ENCODE measurements at regions of chr10 and their contacts with region 1.

Region 1: DNA sequence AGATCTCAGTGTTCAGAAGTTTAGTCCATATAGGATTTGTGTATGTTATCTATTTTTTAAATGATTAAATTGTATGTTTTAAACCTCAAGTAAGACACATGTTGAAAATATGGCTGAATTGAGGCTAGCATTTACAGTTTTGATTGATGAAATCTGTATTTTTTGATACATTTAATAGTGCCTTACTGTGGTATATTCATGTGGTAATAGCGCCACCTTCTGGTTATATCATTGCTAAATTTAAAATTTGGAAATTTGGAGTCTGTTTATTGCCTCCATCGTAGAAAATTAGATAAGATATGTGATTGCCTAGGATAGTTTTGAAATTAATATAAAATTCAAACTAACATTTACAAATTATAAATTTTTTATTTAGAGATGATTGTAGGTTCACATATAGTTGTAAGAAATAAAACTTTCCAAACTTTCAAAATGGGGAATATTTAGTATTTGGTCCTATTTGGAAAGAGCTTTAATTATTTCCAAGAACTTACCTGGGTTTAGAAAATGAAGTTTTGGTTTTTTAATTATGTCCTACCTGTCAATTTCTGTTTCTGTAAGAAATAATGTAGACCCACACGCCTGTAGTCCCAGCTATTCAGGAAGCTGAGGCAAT is 19.1 kb upstream of the ARMS2 start:
- DNase-seq: no peak
- CTCF ChIP-seq: peak; percentile 36

Region 2: GRCh38 chr10:122267849-122268737 is 167.2 kb before region 1 on chr10:
- CTCF ChIA-PET with region 1: interaction called, 59 read pairs
- POLR2A ChIA-PET with region 1: no interaction called
- DNase-seq: peak; percentile 83
- CTCF ChIP-seq: peak; percentile 91

Region 3: GRCh38 chr10:122286867-122287266 is 148.5 kb before region 1 on chr10:
- CTCF ChIA-PET with region 1: interaction called, 74 read pairs
- POLR2A ChIA-PET with region 1: no interaction called
- DNase-seq: no peak
- CTCF ChIP-seq: no peak

Region 4: DNA sequence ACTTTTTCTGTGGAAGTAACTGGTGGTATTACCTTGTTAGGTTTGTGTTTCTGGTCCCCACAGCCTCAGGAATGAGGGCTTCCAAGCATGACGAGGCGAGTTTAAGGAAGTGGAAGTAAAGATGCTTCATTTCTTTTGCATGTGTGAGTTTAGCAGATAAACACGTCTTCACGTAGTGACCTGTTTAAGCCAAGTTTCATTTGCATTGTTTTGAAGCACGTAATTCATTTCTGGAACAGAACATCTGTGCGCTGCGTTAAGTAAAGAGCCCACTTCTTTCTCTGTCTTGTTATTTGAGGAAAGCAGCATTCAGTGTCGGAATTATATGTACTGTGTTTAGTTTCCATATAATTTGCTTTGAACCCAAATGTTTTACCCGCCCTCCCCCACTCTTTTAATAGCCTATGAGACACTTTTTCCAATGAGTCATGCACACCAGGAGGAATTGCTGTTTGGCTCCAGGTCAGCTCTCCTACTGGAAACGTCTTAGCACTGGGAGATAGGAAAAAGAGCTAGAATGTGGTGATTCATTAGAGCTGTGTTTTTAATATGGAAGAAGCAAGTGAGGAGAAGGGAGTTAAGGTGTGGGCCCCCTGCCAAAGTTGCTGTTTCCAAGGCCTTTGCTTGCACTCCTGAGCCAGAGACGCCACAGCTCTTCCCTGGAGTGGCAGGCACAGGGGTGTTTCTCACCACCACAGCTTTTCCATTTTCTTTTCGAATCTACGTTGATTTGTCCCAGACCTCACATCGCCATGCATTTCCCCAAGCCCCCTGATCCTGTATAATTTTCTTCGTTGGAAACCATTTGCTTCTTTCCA is 127.4 kb before region 1 on chr10:
- CTCF ChIA-PET with region 1: interaction called, 30 read pairs
- POLR2A ChIA-PET with region 1: interaction called, 3 read pairs
- DNase-seq: peak; percentile 57
- CTCF ChIP-seq: no peak

Region 5: DNA sequence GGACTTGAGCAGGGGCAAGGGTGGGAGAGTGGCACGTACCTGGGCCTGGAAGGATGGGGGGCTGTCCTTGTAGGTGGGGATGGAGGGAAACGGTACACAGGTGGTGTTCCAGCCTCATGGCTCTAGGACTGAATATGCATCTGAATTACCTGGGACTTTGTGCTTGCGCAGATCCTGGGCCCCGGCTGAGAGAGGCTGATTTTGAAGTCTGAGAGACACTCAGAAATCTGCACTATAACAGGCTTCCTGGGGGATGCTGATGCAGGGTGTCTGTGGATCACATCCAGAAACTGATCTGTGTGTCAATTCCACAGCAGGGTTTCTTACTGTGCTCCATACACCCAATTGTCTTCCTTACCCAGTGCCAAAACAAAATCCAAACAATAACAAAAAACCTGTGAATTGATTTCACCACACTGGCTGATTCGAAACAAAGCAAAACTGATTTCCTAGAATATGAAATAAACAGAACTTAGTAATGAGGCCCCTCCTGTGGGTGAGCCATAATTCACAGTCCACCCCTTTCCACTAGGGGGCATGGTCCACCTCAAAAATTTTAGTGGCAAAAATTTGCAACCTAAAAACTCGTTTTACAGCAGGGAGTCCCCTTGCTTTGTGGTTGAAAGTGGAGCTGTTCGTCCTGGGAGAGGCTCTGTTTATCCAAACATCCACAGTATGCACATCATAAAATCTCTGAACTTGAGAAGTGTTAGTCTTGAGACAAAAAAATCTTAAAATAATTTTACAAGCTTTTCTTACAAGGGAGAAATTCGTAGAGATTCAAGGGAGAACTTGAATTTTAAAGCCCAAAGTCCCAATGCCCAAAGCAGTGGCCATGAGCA is 92.8 kb before region 1 on chr10:
- CTCF ChIA-PET with region 1: interaction called, 50 read pairs
- POLR2A ChIA-PET with region 1: no interaction called
- DNase-seq: peak; percentile 62
- CTCF ChIP-seq: peak; percentile 62

Region 6: DNA sequence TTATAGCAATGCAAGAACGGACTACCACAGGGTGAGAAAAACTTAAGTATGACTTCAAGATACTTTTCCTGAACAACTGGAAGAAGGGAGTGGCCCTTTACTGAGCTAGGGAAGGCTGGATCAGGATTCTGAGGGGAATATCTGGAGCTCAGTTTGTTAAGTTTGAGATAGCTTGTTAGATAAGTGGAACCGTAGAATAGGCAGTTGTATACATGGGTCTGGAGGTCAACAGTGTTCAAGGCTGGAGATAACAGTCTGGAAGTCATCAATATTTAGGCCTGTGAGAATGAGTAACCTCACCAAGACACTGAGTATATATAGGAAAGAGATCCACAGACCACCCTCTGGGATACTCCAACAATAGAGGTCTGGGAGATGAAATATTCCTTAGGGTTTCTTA is 53.6 kb before region 1 on chr10:
- CTCF ChIA-PET with region 1: no interaction called
- POLR2A ChIA-PET with region 1: no interaction called
- DNase-seq: no peak
- CTCF ChIP-seq: no peak

Region 7: DNA sequence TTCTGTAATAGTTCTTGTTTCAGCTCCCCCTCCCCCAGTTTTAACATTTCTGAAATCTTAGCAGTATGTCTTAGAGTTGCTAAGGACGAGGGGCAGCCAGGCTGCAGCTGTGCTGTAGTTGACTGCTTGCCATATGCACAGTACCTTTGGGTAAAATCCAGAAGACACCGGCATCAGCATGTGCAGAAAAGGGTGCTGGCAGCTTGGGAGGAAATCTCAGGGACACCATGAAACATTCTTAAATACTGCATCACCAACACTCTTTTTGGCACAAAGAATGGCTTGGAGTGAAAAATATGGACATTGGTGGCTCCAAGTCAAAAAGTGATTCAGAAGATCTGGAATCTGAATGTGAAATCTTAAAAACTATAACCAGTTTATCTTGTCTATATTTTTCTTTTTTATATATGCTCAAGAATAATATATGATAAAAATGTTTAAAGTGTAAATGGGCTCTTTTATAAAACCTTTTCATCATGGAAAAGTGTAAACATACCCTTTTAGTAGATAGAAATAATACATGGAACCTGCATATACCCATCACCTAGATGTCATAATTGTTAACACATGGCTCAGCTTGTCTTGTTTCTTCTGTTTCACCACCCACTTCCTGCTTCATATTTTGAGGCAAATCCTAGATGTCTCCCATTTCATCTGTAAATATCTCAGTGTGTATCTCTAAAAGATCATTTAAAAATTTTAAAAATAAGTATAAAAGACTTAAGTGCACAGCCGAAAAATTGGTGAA is 15.3 kb before region 1 on chr10:
- CTCF ChIA-PET with region 1: interaction called, 26 read pairs
- POLR2A ChIA-PET with region 1: no interaction called
- DNase-seq: no peak
- CTCF ChIP-seq: no peak

Region 8: GRCh38 chr10:122587098-122587760 is 151.9 kb after region 1 on chr10:
- CTCF ChIA-PET with region 1: no interaction called
- POLR2A ChIA-PET with region 1: no interaction called
- DNase-seq: no peak
- CTCF ChIP-seq: no peak